ENCODE measurements at regions of chr15 and their contacts with region 1.

Region 1: GRCh38 chr15:60916679-60917460 is 312.2 kb downstream of the RORA start:
- DNase-seq: no peak
- H3K4me3 ChIP-seq: peak overlapping the region in 1 of 2 donors; percentile 16
- H3K27ac ChIP-seq: peak overlapping the region; percentile 77
- H3K4me1 ChIP-seq: peaks cover 35% of the 10 kb centered on the region
- H3K27me3 ChIP-seq: no peaks in the 10 kb centered on the region
- CTCF ChIP-seq: peak; percentile 39 to 92 (median 67)
- POLR2A ChIP-seq: no peak

Region 2: GRCh38 chr15:60548101-60548500 is 368.8 kb before region 1 on chr15:
- intact Hi-C with region 1: no loop called
- DNase-seq: no peak
- H3K4me3 ChIP-seq: no peak overlapping the region
- H3K27ac ChIP-seq: no peak overlapping the region
- H3K4me1 ChIP-seq: no peaks in the 10 kb centered on the region
- H3K27me3 ChIP-seq: no peaks in the 10 kb centered on the region
- CTCF ChIP-seq: no peak
- POLR2A ChIP-seq: no peak

Region 3: GRCh38 chr15:60592371-60593169 is 324.3 kb before region 1 on chr15:
- intact Hi-C with region 1: loop called (anchors 5 kb)
- DNase-seq: peak in 1 of 2 donors; percentile 90
- H3K4me3 ChIP-seq: peak overlapping the region; percentile 86 to 96
- H3K27ac ChIP-seq: peak overlapping the region; percentile 98
- H3K4me1 ChIP-seq: no peaks in the 10 kb centered on the region
- H3K27me3 ChIP-seq: no peaks in the 10 kb centered on the region
- CTCF ChIP-seq: no peak
- POLR2A ChIP-seq: peak; percentile 28 to 87

Measured in vagina (tissue), 2 donors.